ENCODE measurements at regions of chr20 and their contacts with region 1.

Region 1: DNA sequence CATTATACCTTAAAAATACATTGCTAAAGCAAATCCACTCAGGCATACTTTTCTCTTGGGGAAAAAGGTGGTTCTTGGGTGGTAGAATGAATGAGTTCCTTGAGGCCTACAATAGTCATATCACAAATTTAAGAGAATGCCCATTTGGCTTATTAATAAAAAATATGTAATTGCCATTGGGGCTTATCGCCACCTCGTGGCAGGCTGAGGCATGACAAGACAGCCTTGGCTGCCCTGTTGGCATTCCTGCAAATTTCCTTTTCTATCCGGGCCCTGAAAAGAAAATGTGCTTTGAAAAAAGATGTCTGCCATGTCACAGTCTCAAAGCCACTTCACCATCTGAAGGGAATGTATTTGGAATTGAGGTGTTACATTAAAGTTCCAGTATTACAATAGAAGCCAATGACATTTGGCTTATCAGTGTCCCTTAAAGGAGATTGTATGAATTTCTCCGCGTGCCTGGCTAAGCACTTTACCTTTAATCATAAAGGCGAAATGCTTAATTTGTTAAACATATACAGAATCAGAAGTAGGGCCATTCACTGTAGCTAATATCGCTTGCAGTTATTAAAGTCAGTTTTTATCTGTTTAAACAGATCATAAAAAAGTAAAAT is 188.3 kb upstream of the ZFP64 start:
- DNase-seq: peak; percentile 26
- H3K4me3 ChIP-seq: no peak overlapping the region
- H3K27ac ChIP-seq: no peak overlapping the region
- H3K4me1 ChIP-seq: no peaks in the 10 kb centered on the region
- H3K27me3 ChIP-seq: no peaks in the 10 kb centered on the region
- CTCF ChIP-seq: peak; percentile 76 to 98 (median 91)
- EP300 ChIP-seq: no peak
- POLR2A ChIP-seq: no peak

Region 2: GRCh38 chr20:52104546-52105441 is 275.0 kb before region 1 on chr20:
- in situ Hi-C with region 1: loop called in 1 of 4 experiments (anchors 25 kb)
- intact Hi-C with region 1: no loop called
- DNase-seq: no peak
- H3K4me3 ChIP-seq: peak overlapping the region in 3 of 4 donors; percentile 5 to 47 (median 27)
- H3K27ac ChIP-seq: no peak overlapping the region
- H3K4me1 ChIP-seq: peaks cover 12 to 25% (median 20%) of the 10 kb centered on the region in 4 donors
- H3K27me3 ChIP-seq: peaks cover 36% of the 10 kb centered on the region
- CTCF ChIP-seq: no peak
- EP300 ChIP-seq: no peak
- POLR2A ChIP-seq: no peak

Region 3: DNA sequence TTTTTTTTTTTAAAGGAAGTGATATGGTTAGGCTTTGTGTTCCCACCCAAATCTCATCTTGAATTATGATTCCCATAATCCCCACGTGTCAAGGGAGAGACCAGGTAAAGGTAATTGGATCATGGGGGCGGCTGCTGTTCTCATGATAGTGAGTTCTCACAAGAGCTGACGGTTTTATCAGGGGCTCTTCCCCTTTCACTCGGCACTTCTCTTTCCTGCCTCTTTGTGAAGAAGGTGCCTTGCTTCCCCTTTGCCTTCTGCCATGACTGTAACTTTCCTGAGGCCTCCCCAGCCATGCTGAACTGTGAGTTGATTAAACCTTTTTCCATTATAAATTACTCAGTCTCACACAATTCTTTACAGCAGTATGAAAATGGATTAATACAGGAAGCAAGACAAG is 252.5 kb before region 1 on chr20:
- in situ Hi-C with region 1: loop called in 2 of 4 experiments (anchors 10 to 25 kb)
- intact Hi-C with region 1: no loop called
- DNase-seq: no peak
- H3K4me3 ChIP-seq: no peak overlapping the region
- H3K27ac ChIP-seq: no peak overlapping the region
- H3K4me1 ChIP-seq: no peaks in the 10 kb centered on the region
- H3K27me3 ChIP-seq: no peaks in the 10 kb centered on the region
- CTCF ChIP-seq: no peak
- EP300 ChIP-seq: no peak
- POLR2A ChIP-seq: no peak

Region 4: GRCh38 chr20:52349806-52350205 is 30.0 kb before region 1 on chr20:
- in situ Hi-C with region 1: no loop called
- intact Hi-C with region 1: loop called (anchors 1 kb)
- DNase-seq: no peak
- H3K4me3 ChIP-seq: no peak overlapping the region
- H3K27ac ChIP-seq: no peak overlapping the region
- H3K4me1 ChIP-seq: no peaks in the 10 kb centered on the region
- H3K27me3 ChIP-seq: no peaks in the 10 kb centered on the region
- CTCF ChIP-seq: no peak
- EP300 ChIP-seq: no peak
- POLR2A ChIP-seq: no peak